ENCODE measurements at regions of chr9 and their contacts with region 1.

Region 1: DNA sequence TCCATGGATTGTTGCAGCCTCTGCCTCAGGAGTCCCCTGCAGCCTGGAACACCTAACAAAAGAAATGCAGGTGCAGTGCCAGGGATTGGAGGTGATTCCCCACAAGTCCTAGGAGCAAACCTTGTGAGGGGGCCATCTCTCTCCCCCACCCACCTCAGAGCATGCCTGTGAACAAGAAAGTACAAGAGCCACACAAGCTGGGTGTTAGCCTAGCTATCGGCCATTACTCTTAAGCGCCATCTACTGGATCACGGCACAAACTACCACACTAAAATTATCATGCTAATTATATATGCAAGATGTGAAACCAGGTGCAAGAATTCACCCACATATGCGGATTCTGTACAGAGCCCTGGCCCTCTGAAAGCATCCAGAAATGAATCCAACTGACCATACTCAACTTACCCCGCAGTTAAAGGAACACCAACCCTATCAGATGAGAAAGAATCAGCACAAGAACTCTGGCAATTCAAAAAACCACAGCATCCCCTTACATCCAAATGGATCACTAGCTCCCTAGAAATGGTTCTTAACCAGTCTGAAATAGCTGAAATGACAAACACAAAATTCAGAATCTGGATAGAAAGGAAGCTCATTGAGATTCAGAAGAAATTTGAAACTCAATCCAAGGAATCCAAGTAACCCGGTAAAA is 16.5 kb upstream of the PRSS3 start:
- DNase-seq: peak; percentile 50
- H3K4me3 Mint-ChIP-seq: no peak overlapping the region
- H3K27ac Mint-ChIP-seq: no peak overlapping the region
- H3K4me1 Mint-ChIP-seq: peaks cover 3% of the 10 kb centered on the region
- H3K27me3 Mint-ChIP-seq: peaks cover 8% of the 10 kb centered on the region

Region 2: GRCh38 chr9:33737811-33738606 is 40.8 kb before region 1 on chr9:
- CTCF ChIA-PET with region 1: interaction called, 18 read pairs
- POLR2A ChIA-PET with region 1: no interaction called
- intact Hi-C with region 1: loop called (anchors 1 kb)
- DNase-seq: peak; percentile 20
- H3K4me3 Mint-ChIP-seq: no peak overlapping the region
- H3K27ac Mint-ChIP-seq: no peak overlapping the region
- H3K4me1 Mint-ChIP-seq: no peaks in the 10 kb centered on the region
- H3K27me3 Mint-ChIP-seq: peaks cover 34% of the 10 kb centered on the region

Region 3: GRCh38 chr9:33867747-33868439 is 89.1 kb after region 1 on chr9:
- CTCF ChIA-PET with region 1: no interaction called
- POLR2A ChIA-PET with region 1: no interaction called
- intact Hi-C with region 1: no loop called
- DNase-seq: no peak
- H3K4me3 Mint-ChIP-seq: no peak overlapping the region
- H3K27ac Mint-ChIP-seq: no peak overlapping the region
- H3K4me1 Mint-ChIP-seq: peaks cover 16% of the 10 kb centered on the region
- H3K27me3 Mint-ChIP-seq: no peaks in the 10 kb centered on the region